ENCODE measurements at regions of chr7 and their contacts with region 1.

Region 1: DNA sequence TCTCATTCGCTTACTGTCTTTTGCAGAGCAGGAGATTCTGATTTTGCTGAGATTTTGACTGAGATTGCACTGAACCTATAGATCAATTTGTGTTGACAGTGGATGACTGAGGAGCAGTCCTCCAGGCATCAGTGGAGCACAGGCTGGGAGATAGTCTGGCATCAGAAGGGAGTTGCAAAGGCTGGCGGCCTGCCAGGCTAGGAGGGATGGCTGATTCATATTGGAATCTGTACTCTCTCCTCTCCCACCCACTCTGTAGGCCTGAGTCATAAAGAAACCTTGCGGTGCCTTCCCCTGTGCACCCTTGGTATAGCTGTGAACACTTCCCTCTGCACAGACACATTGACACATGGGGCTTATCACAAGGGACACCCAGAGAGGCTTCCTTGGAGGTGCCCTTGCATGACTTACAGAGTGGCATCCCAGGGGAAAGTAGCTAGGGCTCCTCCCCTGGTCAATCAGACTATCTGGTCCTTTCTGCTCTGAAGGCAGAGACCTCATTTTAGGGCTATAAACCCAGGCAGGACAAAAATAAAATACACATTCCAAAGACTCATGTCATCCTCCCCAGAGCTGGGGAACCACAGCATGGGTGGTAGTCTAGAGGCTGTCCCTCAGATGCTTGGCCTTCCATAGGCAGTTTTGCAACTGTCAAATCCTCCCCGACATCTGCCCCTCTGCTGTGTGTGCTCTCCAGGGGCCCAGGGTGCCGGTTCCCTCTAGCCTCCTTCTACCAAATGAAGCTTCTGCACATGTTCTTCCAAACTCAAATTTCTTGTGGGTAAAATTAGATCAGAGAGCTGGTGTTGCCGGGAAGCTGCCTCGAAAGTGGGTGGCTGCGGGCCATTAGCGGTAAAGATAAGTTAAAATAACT is 37.4 kb upstream of the EEPD1 start:
- DNase-seq: peak; percentile 96
- ATAC-seq: peak; percentile 99
- H3K4me3 Mint-ChIP-seq: no peak overlapping the region
- H3K27ac Mint-ChIP-seq: peak overlapping the region; percentile 59
- H3K4me1 Mint-ChIP-seq: peaks cover 35% of the 10 kb centered on the region
- H3K27me3 Mint-ChIP-seq: peaks cover 27% of the 10 kb centered on the region

Region 2: DNA sequence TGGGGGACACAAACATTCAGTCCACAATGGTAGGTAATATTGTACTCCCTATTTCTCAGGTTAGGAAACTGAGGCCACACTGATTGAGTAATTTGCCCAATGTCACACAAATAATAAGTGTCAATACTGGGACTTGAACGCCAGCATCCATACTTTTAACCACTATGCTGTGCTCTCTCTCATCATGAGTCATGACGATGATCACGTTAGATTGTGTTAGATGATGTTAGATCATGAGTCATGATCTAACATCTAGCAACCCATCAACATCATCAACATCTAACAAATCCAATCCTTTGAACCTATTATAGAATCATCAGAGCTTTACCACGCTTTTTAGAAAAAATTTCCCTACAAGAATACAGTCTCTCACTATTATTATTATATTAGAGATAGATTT is 392.7 kb before region 1 on chr7:
- CTCF ChIA-PET with region 1: no interaction called
- POLR2A ChIA-PET with region 1: no interaction called
- intact Hi-C with region 1: loop called (anchors 2 to 10 kb)
- DNase-seq: peak; percentile 33
- ATAC-seq: peak; percentile 80
- H3K4me3 Mint-ChIP-seq: peak overlapping the region; percentile 32
- H3K27ac Mint-ChIP-seq: peak overlapping the region; percentile 90
- H3K4me1 Mint-ChIP-seq: peaks cover 55% of the 10 kb centered on the region
- H3K27me3 Mint-ChIP-seq: no peaks in the 10 kb centered on the region

Region 3: GRCh38 chr7:35729061-35729783 is 386.5 kb before region 1 on chr7:
- CTCF ChIA-PET with region 1: no interaction called
- POLR2A ChIA-PET with region 1: no interaction called
- intact Hi-C with region 1: loop called in 1 of 2 experiments (anchors 10 kb)
- DNase-seq: peak; percentile 60
- ATAC-seq: peak; percentile 72
- H3K4me3 Mint-ChIP-seq: no peak overlapping the region
- H3K27ac Mint-ChIP-seq: no peak overlapping the region
- H3K4me1 Mint-ChIP-seq: peaks cover 57% of the 10 kb centered on the region
- H3K27me3 Mint-ChIP-seq: no peaks in the 10 kb centered on the region

Region 4: DNA sequence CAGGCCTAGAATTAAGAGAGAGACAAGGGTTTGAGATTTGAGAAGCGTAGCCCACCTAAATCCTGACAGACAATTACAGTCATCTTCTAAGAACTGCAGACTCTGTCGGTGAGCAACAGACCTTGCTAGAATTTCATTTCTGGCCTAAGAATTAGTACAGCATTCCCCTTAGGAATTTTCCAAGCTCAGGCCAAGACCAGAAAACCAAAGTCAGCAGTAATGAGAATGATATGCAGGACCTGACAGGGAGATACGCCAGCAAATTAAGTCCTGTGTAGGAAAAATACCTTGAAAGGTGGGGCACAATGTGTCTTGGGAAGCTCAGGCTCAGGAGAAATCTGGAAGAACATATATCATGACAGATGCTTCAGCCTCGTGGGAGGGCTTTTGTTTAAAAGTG is 368.1 kb before region 1 on chr7:
- CTCF ChIA-PET with region 1: no interaction called
- POLR2A ChIA-PET with region 1: no interaction called
- intact Hi-C with region 1: no loop called
- DNase-seq: no peak
- ATAC-seq: no peak
- H3K4me3 Mint-ChIP-seq: no peak overlapping the region
- H3K27ac Mint-ChIP-seq: no peak overlapping the region
- H3K4me1 Mint-ChIP-seq: no peaks in the 10 kb centered on the region
- H3K27me3 Mint-ChIP-seq: no peaks in the 10 kb centered on the region

Region 5: GRCh38 chr7:36152756-36153570 is 37.3 kb after region 1 on chr7 and contains the start of gene EEPD1:
- CTCF ChIA-PET with region 1: interaction called, 3 read pairs
- POLR2A ChIA-PET with region 1: no interaction called
- intact Hi-C with region 1: loop called (anchors 1 kb)
- DNase-seq: peak; percentile 100
- ATAC-seq: peak; percentile 98
- H3K4me3 Mint-ChIP-seq: peak within 1 kb of the TSS; percentile 71
- H3K27ac Mint-ChIP-seq: peak within 1 kb of the TSS; percentile 43
- H3K4me1 Mint-ChIP-seq: peaks cover 29% of the 10 kb centered on the region
- H3K27me3 Mint-ChIP-seq: no peaks in the 10 kb centered on the region
- total RNA-seq, gene EEPD1: 1.3 TPM

Region 6: GRCh38 chr7:36286226-36286625 is 170.5 kb after region 1 on chr7:
- CTCF ChIA-PET with region 1: interaction called, 3 read pairs
- POLR2A ChIA-PET with region 1: no interaction called
- intact Hi-C with region 1: loop called (anchors 1 to 5 kb)
- DNase-seq: peak; percentile 77
- ATAC-seq: peak; percentile 82
- H3K4me3 Mint-ChIP-seq: peak overlapping the region; percentile 20
- H3K27ac Mint-ChIP-seq: peak overlapping the region; percentile 93
- H3K4me1 Mint-ChIP-seq: peaks cover 71% of the 10 kb centered on the region
- H3K27me3 Mint-ChIP-seq: no peaks in the 10 kb centered on the region

Region 7: GRCh38 chr7:36366718-36367560 is 251.3 kb after region 1 on chr7:
- CTCF ChIA-PET with region 1: no interaction called
- POLR2A ChIA-PET with region 1: no interaction called
- intact Hi-C with region 1: loop called in 1 of 2 experiments (anchors 1 kb)
- DNase-seq: peak; percentile 95
- ATAC-seq: peak; percentile 98
- H3K4me3 Mint-ChIP-seq: peak overlapping the region; percentile 83
- H3K27ac Mint-ChIP-seq: peak overlapping the region; percentile 19
- H3K4me1 Mint-ChIP-seq: no peaks in the 10 kb centered on the region
- H3K27me3 Mint-ChIP-seq: peaks cover 10% of the 10 kb centered on the region